BJ (cell line): ENCODE measurements at regions of chr1 and their contacts with region 1.

Region 1: GRCh38 chr1:155934097-155934935 is at the start of gene KHDC4:
- DNase-seq: peak; percentile 98
- H3K4me3 ChIP-seq: peak within 1 kb of the TSS; percentile 85
- H3K27me3 ChIP-seq: no peaks in the 10 kb centered on the region
- CTCF ChIP-seq: peak; percentile 29; the same call in 1 of the 2 replicates
- polyA plus RNA-seq, gene KHDC4: 39.0 and 39.8 TPM in 2 replicates

Region 2: GRCh38 chr1:155920717-155921116 is 13.6 kb before region 1 on chr1:
- CTCF ChIA-PET with region 1: interaction called, 10 read pairs
- POLR2A ChIA-PET with region 1: interaction called, 3 read pairs
- DNase-seq: no peak
- H3K4me3 ChIP-seq: no peak overlapping the region
- H3K27me3 ChIP-seq: no peaks in the 10 kb centered on the region
- CTCF ChIP-seq: no peak

Region 3: DNA sequence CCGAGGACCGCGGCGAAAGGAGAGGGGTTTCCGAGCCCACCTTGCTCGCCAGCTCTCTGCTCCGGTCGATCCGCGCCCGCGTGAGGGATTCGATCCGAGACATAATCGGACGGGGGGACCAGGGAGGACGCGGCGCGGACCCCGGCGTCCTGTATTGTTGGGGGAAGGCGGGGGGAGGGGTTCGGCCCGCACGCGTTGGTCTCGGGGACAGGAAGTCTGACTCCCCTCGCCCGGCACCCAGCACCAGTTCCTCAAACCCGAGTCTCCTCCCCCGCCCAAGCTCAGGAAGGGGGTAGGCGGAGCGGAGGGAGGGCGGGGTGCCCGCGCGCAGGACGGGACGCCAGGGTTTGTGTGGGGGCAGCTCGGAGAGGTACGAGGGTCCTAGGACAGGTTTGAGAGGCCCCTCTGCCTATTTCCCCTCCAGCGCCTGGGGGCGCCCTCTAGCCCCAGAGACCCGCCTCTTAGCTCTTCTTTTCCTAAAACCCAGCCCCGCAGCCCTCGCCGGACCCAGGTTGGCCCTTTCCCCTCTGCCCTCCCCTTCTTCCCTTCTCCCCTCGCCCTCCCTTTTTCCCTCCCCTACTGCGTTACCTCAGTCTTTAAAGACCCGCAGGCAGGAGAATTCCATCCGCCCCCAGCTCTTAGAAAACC is 44.1 kb after region 1 on chr1 and contains the start of gene ARHGEF2:
- CTCF ChIA-PET with region 1: interaction called, 57 read pairs
- POLR2A ChIA-PET with region 1: interaction called, 3 read pairs
- DNase-seq: no peak
- H3K4me3 ChIP-seq: peak within 1 kb of the TSS; percentile 80
- H3K27me3 ChIP-seq: no peaks in the 10 kb centered on the region
- CTCF ChIP-seq: peak; percentile 40
- polyA plus RNA-seq, gene ARHGEF2: 130 and 213 TPM in 2 replicates

Region 4: GRCh38 chr1:156262461-156263287 is 328.4 kb after region 1 on chr1:
- CTCF ChIA-PET with region 1: no interaction called
- POLR2A ChIA-PET with region 1: interaction called, 22 read pairs
- DNase-seq: peak; percentile 63
- H3K4me3 ChIP-seq: no peak overlapping the region
- H3K27me3 ChIP-seq: no peaks in the 10 kb centered on the region
- CTCF ChIP-seq: no peak